GM23248 (cell line): ENCODE measurements at regions of chr5 and their contacts with region 1.

Region 1: DNA sequence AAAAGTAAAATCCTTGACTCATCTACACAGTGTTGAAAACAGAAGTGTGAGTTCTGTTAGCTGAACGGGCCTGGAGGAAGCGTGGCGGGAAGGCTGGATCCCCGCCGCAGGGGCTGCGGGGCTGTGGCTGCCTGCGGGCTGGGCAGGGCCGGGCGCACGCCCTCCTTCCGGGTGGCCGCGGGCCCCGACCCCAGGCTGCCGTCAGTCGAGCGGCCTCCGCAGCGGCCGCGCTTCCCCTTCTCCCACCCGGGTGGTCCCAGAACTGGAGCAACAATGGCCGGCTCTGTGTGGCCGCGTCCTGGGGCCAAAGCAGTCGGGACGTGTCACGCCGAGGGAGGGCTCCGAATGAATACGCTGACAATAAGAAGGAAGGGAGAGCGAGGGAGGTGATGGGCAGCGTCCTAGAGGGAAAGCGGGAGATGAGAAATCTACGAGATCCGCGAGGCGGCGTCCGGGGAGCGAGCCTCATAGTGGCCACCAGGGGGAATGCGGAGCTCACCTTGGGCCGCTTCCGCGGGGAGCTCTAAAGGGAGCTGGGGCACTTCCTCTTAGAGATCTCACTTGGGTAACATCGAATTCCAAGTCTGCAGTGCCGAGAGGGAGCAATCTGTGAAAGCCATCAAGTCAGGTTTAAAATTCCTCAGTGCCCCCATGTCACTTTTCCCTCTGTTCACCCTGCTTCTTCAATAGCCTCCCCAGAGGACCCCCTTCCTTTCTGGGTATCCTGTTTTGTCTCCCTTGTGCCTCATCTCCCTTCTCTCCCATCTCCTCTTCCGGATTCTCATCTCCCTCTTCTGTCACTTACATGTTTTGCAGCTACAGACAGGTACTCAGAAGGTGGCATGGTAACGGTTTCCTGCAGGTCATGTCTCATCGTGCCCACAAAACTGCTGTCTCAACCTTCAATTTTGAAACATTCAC is 83.9 kb downstream of the SLC1A3 start:
- DNase-seq: peak; percentile 92
- H3K4me3 ChIP-seq: peak overlapping the region; percentile 78
- H3K27ac ChIP-seq: peak overlapping the region; percentile 26; the same call in 1 of the 2 replicates
- H3K4me1 ChIP-seq: peaks cover 36% of the 10 kb centered on the region
- H3K27me3 ChIP-seq: no peaks in the 10 kb centered on the region

Region 2: DNA sequence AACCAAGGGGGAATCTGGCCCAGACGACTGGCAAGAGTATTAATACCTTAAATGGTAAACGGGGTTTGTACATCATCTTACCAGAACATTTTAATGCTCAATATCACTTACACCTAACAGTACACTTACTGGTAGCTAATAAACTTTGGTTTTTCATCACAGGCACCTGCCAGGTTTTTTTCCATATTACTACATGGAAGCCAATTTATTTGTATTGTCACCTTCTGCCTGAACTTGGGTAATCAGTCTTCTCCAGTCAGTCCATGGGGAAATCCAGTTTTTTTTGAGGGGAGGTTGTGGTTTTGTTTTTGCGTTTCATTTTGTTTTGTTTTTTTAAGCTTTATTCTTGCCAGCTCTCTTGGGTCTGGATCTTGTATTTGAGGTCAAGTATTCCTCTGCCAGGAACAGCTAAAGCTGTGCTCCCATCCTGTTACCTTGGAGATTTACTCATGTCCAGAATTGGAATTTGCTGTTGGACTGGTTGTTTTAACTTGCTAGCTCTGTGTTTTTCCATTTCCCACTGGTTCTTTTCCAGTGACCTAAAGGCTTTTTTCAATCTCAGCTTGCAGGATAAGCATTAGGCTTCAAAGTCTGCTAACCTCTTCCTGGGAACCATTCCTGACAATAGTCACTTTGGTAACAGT is 437.5 kb before region 1 on chr5:
- in situ Hi-C with region 1: loop called (anchors 25 kb)
- DNase-seq: peak; percentile 4
- H3K4me3 ChIP-seq: no peak overlapping the region
- H3K27ac ChIP-seq: no peak overlapping the region
- H3K4me1 ChIP-seq: no peaks in the 10 kb centered on the region
- H3K27me3 ChIP-seq: no peaks in the 10 kb centered on the region

Region 3: DNA sequence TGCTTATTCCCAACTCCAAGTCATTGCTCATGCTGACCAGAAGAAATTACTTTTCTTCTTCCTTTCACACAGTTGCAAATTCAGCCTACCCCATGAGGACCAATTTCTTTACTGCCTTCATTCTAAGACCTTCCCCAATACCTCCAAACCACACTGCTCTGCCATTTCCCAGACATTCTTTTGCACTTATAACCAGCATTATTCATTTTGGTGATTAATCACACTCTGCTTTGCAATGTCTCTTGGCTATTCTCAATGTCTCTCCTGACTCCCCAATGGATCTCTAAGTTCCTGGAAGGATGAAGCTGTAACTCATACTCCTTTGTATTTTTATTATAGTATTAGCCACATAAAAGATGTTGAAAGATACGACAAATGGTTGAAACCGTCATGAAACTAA is 282.9 kb before region 1 on chr5:
- in situ Hi-C with region 1: loop called (anchors 5 kb)
- DNase-seq: peak; percentile 63
- H3K4me3 ChIP-seq: no peak overlapping the region
- H3K27ac ChIP-seq: no peak overlapping the region
- H3K4me1 ChIP-seq: peaks cover 44% of the 10 kb centered on the region
- H3K27me3 ChIP-seq: no peaks in the 10 kb centered on the region

Region 4: DNA sequence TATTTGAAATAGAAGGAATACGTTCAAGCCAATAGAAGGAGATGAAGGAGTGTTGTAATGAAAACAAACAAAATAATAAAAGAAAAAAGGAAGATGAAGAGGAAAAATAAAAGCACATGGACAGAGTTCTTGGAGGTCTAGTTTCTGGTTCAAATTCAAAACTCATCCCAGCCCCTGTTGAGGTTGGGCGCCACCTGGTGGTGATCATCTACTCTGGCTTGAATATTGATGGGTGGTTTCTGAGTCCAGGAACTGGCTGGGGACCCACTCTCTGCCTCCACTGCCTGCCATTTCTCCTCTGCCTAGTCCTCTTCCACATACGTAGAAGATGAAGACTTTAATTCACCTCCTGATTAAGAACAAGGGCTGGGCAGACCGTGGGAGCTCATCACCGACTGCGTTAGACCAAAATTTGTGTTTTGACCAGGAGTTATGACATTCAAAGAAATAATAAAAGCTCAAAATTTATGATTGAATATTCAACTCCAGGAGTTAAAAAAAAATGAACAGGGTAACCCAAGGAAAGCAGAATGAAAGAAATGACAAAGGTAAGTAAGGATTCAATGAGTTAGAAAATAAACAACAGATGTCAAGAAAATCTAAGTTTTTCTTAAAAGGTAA is 182.9 kb before region 1 on chr5:
- in situ Hi-C with region 1: loop called (anchors 10 kb)
- DNase-seq: peak; percentile 82
- H3K4me3 ChIP-seq: no peak overlapping the region
- H3K27ac ChIP-seq: no peak overlapping the region
- H3K4me1 ChIP-seq: peaks cover 17% of the 10 kb centered on the region
- H3K27me3 ChIP-seq: no peaks in the 10 kb centered on the region; the same call in 1 of the 2 replicates

Region 5: GRCh38 chr5:36870399-36871040 is 180.2 kb after region 1 on chr5:
- in situ Hi-C with region 1: no loop called
- DNase-seq: peak; percentile 77
- H3K4me3 ChIP-seq: no peak overlapping the region
- H3K27ac ChIP-seq: no peak overlapping the region
- H3K4me1 ChIP-seq: peaks cover 22% of the 10 kb centered on the region
- H3K27me3 ChIP-seq: no peaks in the 10 kb centered on the region

Region 6: DNA sequence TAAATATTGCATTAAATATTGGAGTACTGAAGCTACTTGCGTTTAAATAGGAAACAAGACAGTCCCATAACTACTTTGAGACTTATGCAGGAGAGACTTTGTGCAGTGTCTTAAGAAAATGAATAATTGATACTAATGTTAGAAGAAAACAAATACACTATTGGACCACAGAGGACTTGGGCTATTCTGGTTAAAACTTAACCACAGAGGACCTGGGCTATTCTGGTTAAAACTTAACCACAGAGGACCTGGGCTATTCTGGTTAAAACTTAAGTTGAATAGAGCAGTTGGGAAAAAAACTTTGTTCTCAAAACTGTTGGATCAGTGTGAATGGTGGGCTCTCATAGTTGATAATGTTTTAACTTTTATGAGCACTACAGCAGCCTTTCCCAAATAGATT is 830.5 kb after region 1 on chr5:
- in situ Hi-C with region 1: no loop called
- DNase-seq: no peak
- H3K4me3 ChIP-seq: no peak overlapping the region
- H3K27ac ChIP-seq: no peak overlapping the region
- H3K4me1 ChIP-seq: no peaks in the 10 kb centered on the region
- H3K27me3 ChIP-seq: no peaks in the 10 kb centered on the region